ENCODE measurements at regions of chr7 and their contacts with region 1.

Region 1: GRCh38 chr7:91835846-91836368 is 44.6 kb downstream of the MTERF1 start:
- DNase-seq: no peak
- ATAC-seq: no peak
- H3K4me3 ChIP-seq: no peak overlapping the region
- H3K27ac ChIP-seq: no peak overlapping the region
- H3K4me1 ChIP-seq: no peaks in the 10 kb centered on the region
- H3K27me3 ChIP-seq: peaks cover 6 to 19% of the 10 kb centered on the region in 2 experiments
- CTCF ChIP-seq: no peak
- EP300 ChIP-seq: no peak
- POLR2A ChIP-seq: no peak
- RAD21 ChIP-seq: no peak

Region 2: DNA sequence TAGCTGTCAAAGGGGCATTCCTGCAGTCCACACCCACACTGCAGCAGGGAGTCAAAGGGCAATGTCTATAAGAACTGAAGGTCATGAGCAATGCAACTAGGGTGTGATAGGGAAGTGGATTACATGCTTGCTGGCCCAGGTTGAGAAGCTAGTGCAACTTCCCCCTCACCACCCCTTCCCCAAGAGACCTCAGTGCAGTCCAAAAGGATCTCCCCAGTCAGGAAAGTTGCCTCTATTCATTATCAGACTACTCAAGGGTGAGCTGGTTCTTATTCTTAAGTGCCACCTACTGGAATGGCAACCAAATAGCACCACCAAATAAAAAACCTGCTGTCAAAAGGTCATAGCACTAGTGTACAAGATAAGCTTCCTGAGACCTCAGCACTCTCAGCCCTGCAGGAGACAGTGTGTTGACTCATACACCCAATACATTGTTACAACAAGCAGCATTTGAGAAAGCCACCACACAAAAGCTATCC is 16.4 kb after region 1 on chr7:
- CTCF ChIA-PET with region 1: no interaction called
- POLR2A ChIA-PET with region 1: no interaction called
- in situ Hi-C with region 1: no loop called
- intact Hi-C with region 1: loop called (anchors 2 kb)
- DNase-seq: peak in 2 of 4 experiments; percentile 51 to 75
- ATAC-seq: peak; percentile 96
- H3K4me3 ChIP-seq: no peak overlapping the region
- H3K27ac ChIP-seq: no peak overlapping the region
- H3K4me1 ChIP-seq: no peaks in the 10 kb centered on the region
- H3K27me3 ChIP-seq: no peaks in the 10 kb centered on the region
- CTCF ChIP-seq: peak; percentile 61 to 77 (median 69)
- EP300 ChIP-seq: 0 out of 2 replicates have a peak, but pooled peaks have one; percentile 31
- POLR2A ChIP-seq: no peak
- RAD21 ChIP-seq: peak; percentile 10 to 61; a peak in 2 of 4 replicates

Region 3: GRCh38 chr7:92119213-92119759 is 283.4 kb after region 1 on chr7:
- CTCF ChIA-PET with region 1: no interaction called
- POLR2A ChIA-PET with region 1: no interaction called
- in situ Hi-C with region 1: no loop called
- intact Hi-C with region 1: no loop called
- DNase-seq: no peak
- ATAC-seq: no peak
- H3K4me3 ChIP-seq: no peak overlapping the region
- H3K27ac ChIP-seq: no peak overlapping the region
- H3K4me1 ChIP-seq: no peaks in the 10 kb centered on the region
- H3K27me3 ChIP-seq: no peaks in the 10 kb centered on the region
- CTCF ChIP-seq: no peak
- EP300 ChIP-seq: no peak
- POLR2A ChIP-seq: no peak
- RAD21 ChIP-seq: no peak

Region 4: GRCh38 chr7:92421676-92422435 is 585.9 kb after region 1 on chr7:
- CTCF ChIA-PET with region 1: no interaction called
- POLR2A ChIA-PET with region 1: no interaction called
- in situ Hi-C with region 1: loop called (anchors 10 kb)
- intact Hi-C with region 1: no loop called
- DNase-seq: peak in 3 of 4 experiments; percentile 26 to 59 (median 33)
- ATAC-seq: no peak
- H3K4me3 ChIP-seq: no peak overlapping the region
- H3K27ac ChIP-seq: no peak overlapping the region
- H3K4me1 ChIP-seq: peaks cover 14 to 20% of the 10 kb centered on the region in 2 experiments
- H3K27me3 ChIP-seq: no peaks in the 10 kb centered on the region
- CTCF ChIP-seq: no peak
- EP300 ChIP-seq: no peak
- POLR2A ChIP-seq: no peak
- RAD21 ChIP-seq: no peak

Measured in K562 (cell line).